GM10248 (cell line): ENCODE measurements at regions of chr1 and their contacts with region 1.

Region 1: DNA sequence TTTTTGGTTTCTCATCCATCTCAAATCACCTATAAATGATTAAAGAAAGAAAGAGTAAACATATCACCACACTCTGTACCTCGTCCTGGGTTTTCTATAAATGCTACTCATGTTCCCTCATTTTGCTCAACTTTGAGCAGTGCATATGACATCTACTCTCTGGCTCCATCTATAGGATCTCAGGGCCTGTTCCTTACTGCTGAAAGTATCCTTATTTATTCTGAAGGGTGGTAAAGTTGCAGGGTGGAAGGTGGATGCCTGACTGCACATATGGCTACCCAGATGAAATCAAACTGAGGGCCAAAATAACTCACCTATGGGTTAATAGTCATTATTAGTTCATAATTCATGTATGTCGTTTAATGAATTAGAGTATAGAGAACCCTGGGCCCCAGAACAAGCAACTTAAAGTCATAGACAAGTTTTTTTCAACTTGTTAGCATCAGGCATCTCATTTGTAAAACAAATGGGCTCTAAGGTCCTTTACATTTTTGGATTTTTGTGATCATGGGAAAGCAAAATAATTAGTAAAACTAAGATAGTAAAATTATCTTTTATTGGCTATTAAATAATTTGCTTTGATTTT is 46.5 kb downstream of the NCF2 start:
- DNase-seq: peak; percentile 23
- CTCF ChIP-seq: peak; percentile 66

Region 2: GRCh38 chr1:183528577-183528976 is 15.1 kb before region 1 on chr1:
- CTCF ChIA-PET with region 1: interaction called, 11 read pairs
- POLR2A ChIA-PET with region 1: no interaction called
- DNase-seq: no peak
- CTCF ChIP-seq: no peak